ENCODE measurements at regions of chr6 and their contacts with region 1.

Region 1: DNA sequence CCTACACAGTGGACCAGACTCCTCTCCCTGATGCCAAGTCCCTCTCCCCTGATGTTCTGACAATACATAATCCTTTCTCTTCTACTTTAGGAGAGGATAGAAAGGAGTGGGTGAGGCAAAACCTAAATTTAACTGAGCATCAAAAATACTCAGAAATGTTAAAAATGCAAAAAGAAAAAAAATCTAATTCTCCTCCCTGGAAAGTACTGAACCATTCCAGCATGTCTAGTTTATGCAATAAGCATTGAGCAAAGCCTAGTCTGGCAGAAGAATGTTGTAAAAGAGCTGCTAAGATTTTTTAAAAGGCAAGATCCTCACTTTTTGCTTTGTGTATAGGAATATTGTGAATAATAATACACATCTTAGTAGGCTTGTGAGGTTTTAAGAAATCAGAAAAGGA is 116.6 kb upstream of the STXBP5 start:
- DNase-seq: no peak
- H3K4me3 ChIP-seq: no peak overlapping the region
- H3K27ac ChIP-seq: no peak overlapping the region
- H3K4me1 ChIP-seq: no peaks in the 10 kb centered on the region
- H3K27me3 ChIP-seq: no peaks in the 10 kb centered on the region
- CTCF ChIP-seq: no peak
- POLR2A ChIP-seq: no peak

Region 2: DNA sequence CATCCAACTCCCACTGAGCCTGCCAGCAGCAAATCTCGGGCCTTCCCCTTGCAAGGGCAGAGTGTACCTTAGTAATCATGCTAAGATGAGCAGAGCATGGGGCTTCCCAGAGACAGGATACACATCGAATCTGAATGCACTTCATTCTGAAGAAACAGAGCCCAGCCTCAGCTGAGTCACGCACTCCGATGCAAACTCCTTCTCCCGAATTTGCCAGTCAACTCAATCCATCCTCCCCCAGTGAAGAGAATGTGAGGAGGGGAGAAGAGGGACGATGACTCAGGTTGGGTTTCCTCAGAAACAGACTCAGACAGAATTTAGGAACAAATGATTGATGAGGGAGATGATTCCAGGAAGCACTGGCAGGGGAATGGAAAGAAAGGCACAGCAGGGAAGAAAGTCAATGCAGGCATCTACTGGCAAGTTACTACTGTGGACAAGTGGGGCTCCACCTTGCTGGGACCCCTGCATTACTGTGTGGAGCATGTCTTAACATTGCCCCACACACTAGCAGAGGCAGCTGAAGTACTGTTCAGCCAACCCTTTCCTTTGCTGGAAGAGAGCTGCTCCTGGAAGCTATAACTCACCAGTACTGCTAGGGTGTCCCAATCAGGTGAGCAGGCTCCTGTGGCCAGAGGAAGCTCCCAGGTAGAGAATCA is 237.3 kb before region 1 on chr6:
- intact Hi-C with region 1: no loop called
- DNase-seq: no peak
- H3K4me3 ChIP-seq: no peak overlapping the region
- H3K27ac ChIP-seq: no peak overlapping the region
- H3K4me1 ChIP-seq: no peaks in the 10 kb centered on the region
- H3K27me3 ChIP-seq: no peaks in the 10 kb centered on the region
- CTCF ChIP-seq: no peak
- POLR2A ChIP-seq: no peak

Region 3: DNA sequence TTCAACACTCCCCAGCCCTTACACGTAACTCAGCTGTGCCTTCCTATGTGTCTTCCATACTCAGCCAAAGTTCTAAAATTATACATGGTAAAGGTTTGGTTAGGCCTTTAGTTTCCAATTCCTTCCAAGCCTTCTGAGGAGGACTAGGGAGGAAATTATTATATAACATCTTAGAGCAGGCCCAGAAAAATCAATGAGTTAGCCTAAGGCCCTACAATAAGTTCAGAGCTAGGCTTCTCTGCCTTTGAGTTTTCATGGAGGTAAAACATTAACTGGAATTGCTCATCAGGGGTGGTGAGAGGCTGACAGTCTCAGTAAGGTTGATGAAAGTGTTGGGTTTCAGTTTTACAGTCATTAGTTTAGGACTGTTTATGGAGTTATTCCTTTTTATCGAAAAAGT is 202.9 kb before region 1 on chr6:
- intact Hi-C with region 1: loop called (anchors 5 kb)
- DNase-seq: no peak
- H3K4me3 ChIP-seq: no peak overlapping the region
- H3K27ac ChIP-seq: no peak overlapping the region
- H3K4me1 ChIP-seq: no peaks in the 10 kb centered on the region
- H3K27me3 ChIP-seq: no peaks in the 10 kb centered on the region
- CTCF ChIP-seq: no peak
- POLR2A ChIP-seq: no peak

Region 4: DNA sequence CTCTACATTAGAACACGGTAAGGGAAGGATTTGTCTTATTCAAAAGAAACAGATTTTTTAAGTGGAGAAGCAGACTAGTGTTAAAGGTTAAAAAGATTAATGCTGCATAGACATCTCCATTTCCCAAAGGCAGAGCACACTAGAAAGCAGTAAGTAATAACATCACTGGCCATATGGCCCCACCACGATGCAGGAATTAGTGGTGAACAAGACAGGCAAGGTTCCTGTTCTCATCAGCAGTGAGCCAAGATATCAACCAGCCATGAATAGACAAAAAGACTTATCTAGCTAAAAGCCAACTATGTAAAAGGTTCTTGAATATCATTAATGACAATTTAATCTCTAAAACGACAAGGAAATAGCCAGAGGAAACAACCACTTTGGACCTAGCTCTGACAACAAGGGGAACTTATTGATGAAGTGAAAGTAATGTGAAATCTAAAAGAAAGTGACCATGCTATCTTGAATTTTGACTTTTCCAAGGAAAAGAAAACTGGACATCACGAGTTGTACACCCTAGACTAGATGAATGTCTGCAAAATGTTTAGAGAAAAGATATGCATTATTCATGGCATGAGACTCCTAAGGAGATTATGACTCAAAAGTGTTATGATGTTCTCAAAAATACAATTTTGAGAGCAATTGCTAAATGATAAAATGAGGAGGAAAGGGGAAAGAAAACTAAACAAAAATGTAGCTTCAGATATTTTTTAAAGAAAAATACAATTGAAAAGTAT is 41.3 kb before region 1 on chr6:
- intact Hi-C with region 1: loop called (anchors 5 kb)
- DNase-seq: no peak
- H3K4me3 ChIP-seq: no peak overlapping the region
- H3K27ac ChIP-seq: no peak overlapping the region
- H3K4me1 ChIP-seq: no peaks in the 10 kb centered on the region
- H3K27me3 ChIP-seq: no peaks in the 10 kb centered on the region
- CTCF ChIP-seq: no peak
- POLR2A ChIP-seq: no peak

Region 5: DNA sequence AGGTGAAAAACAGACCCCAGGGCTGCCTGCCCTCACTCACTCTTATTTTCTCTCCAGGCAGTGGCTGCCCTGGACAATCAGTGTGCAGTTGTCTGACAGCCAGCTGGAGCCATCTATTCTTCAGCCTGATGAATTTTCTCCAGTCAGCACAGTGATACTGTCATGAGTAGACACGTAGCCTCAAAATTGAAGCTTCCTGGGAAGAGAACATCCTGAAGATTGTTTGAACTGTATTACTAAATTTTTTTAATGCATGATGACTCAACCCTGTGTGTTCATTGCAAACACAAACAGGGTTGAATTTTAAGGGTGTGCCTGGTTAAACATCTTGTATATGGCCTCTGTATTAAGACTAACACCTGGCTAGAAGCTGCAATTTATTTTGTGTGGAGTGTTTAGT is 66.8 kb after region 1 on chr6:
- intact Hi-C with region 1: loop called (anchors 2 kb)
- DNase-seq: no peak
- H3K4me3 ChIP-seq: no peak overlapping the region
- H3K27ac ChIP-seq: no peak overlapping the region
- H3K4me1 ChIP-seq: no peaks in the 10 kb centered on the region
- H3K27me3 ChIP-seq: no peaks in the 10 kb centered on the region
- CTCF ChIP-seq: no peak
- POLR2A ChIP-seq: no peak

Measured in breast epithelium (tissue), 4 donors.